ENCODE measurements at regions of chr2 and their contacts with region 1.

Region 1: GRCh38 chr2:9843229-9844035 is at the start of gene TAF1B:
- DNase-seq: peak; percentile 95 to 97 (median 97)
- ATAC-seq: peak; percentile 95
- H3K4me3 ChIP-seq: peak within 1 kb of the TSS; percentile 55
- H3K27ac ChIP-seq: peak within 1 kb of the TSS; percentile 88
- H3K4me1 ChIP-seq: peaks cover 10 to 17% of the 10 kb centered on the region in 2 experiments
- H3K27me3 ChIP-seq: no peaks in the 10 kb centered on the region
- CTCF ChIP-seq: peak; percentile 68 to 80 (median 71)
- EP300 ChIP-seq: no peak; the same call in 1 of the 2 replicates
- POLR2A ChIP-seq: peak; percentile 79
- RAD21 ChIP-seq: peak; percentile 33 to 51; a peak in 3 of 4 replicates
- polyA plus RNA-seq, gene TAF1B: 13.2 to 17.4 TPM

Region 2: GRCh38 chr2:9508931-9509330 is 334.5 kb before region 1 on chr2:
- CTCF ChIA-PET with region 1: no interaction called
- POLR2A ChIA-PET with region 1: no interaction called
- in situ Hi-C with region 1: no loop called
- intact Hi-C with region 1: no loop called
- DNase-seq: no peak
- ATAC-seq: no peak
- H3K4me3 ChIP-seq: no peak overlapping the region
- H3K27ac ChIP-seq: no peak overlapping the region
- H3K4me1 ChIP-seq: no peaks in the 10 kb centered on the region
- H3K27me3 ChIP-seq: no peaks in the 10 kb centered on the region
- CTCF ChIP-seq: no peak
- EP300 ChIP-seq: no peak
- POLR2A ChIP-seq: no peak
- RAD21 ChIP-seq: no peak

Region 3: GRCh38 chr2:9813312-9814133 is 29.9 kb before region 1 on chr2:
- CTCF ChIA-PET with region 1: interaction called, 3 read pairs
- POLR2A ChIA-PET with region 1: interaction called, 9 read pairs
- in situ Hi-C with region 1: no loop called
- intact Hi-C with region 1: loop called (anchors 2 kb)
- DNase-seq: peak; percentile 79 to 87 (median 84)
- ATAC-seq: peak; percentile 94
- H3K4me3 ChIP-seq: no peak overlapping the region
- H3K27ac ChIP-seq: no peak overlapping the region
- H3K4me1 ChIP-seq: peaks cover 19 to 36% of the 10 kb centered on the region in 2 experiments; a peak in 4 of 5 replicates
- H3K27me3 ChIP-seq: no peaks in the 10 kb centered on the region
- CTCF ChIP-seq: peak; percentile 88 to 95 (median 90)
- EP300 ChIP-seq: no peak
- POLR2A ChIP-seq: no peak
- RAD21 ChIP-seq: peak; percentile 77 to 93

Region 4: GRCh38 chr2:9897331-9897737 is 53.9 kb after region 1 on chr2:
- CTCF ChIA-PET with region 1: no interaction called
- POLR2A ChIA-PET with region 1: no interaction called
- in situ Hi-C with region 1: no loop called
- intact Hi-C with region 1: no loop called
- DNase-seq: peak in 1 of 4 experiments; percentile 50
- ATAC-seq: peak; percentile 67
- H3K4me3 ChIP-seq: no peak overlapping the region
- H3K27ac ChIP-seq: no peak overlapping the region
- H3K4me1 ChIP-seq: no peaks in the 10 kb centered on the region; a peak in 1 of 5 replicates
- H3K27me3 ChIP-seq: no peaks in the 10 kb centered on the region
- CTCF ChIP-seq: no peak
- EP300 ChIP-seq: no peak
- POLR2A ChIP-seq: no peak
- RAD21 ChIP-seq: no peak

Region 5: GRCh38 chr2:9914384-9915065 is 71.1 kb after region 1 on chr2:
- CTCF ChIA-PET with region 1: no interaction called
- POLR2A ChIA-PET with region 1: interaction called, 10 read pairs
- in situ Hi-C with region 1: no loop called
- intact Hi-C with region 1: loop called (anchors 1 kb)
- DNase-seq: peak; percentile 34 to 81 (median 52)
- ATAC-seq: peak; percentile 99
- H3K4me3 ChIP-seq: no peak overlapping the region
- H3K27ac ChIP-seq: peak overlapping the region; percentile 43; the same call in 2 of the 3 replicates
- H3K4me1 ChIP-seq: peaks cover 0 to 8% of the 10 kb centered on the region in 2 experiments; a peak in 3 of 5 replicates
- H3K27me3 ChIP-seq: no peaks in the 10 kb centered on the region
- CTCF ChIP-seq: peak; percentile 59 to 78 (median 61)
- EP300 ChIP-seq: peak; percentile 61
- POLR2A ChIP-seq: no peak
- RAD21 ChIP-seq: peak; percentile 85 to 89

Region 6: GRCh38 chr2:10382354-10383061 is 539.1 kb after region 1 on chr2:
- CTCF ChIA-PET with region 1: no interaction called
- POLR2A ChIA-PET with region 1: no interaction called
- in situ Hi-C with region 1: no loop called
- intact Hi-C with region 1: no loop called
- DNase-seq: no peak
- ATAC-seq: no peak; the same call in 2 of the 3 replicates
- H3K4me3 ChIP-seq: no peak overlapping the region
- H3K27ac ChIP-seq: no peak overlapping the region
- H3K4me1 ChIP-seq: peaks cover 12 to 41% of the 10 kb centered on the region in 2 experiments; a peak in 4 of 5 replicates
- H3K27me3 ChIP-seq: no peaks in the 10 kb centered on the region
- CTCF ChIP-seq: no peak
- EP300 ChIP-seq: no peak
- POLR2A ChIP-seq: no peak
- RAD21 ChIP-seq: no peak

Measured in K562 (cell line).